Panc1 (cell line): ENCODE measurements at regions of chr17 and their contacts with region 1.

Region 1: DNA sequence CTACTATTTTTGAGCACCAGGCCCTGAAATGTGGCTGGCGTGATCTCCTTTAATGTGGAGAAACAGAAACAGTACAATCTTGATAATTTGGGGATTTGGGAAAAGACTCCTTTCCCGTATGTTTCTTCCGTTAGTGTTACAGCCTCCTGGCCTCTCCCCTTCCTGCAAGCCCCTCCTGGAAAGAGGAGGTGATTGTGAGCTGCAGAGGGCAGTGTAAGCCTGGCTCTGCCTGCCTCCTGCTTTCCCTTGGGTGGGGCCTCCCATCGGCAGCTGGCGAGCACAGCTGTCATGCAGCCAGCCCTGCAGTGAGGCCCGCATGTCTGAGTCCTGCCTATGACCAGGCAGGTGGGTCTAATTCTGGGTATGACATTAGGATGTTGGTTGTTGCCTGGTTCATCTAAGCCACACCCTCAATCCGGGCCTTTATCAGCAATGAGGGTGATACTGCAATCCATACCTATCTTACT is 48.7 kb upstream of the WSB1 start:
- DNase-seq: no peak
- ATAC-seq: peak; percentile 98
- H3K4me3 ChIP-seq: peak overlapping the region in 1 of 2 experiments; percentile 25; a peak in 2 of 4 replicates
- H3K27ac ChIP-seq: peak overlapping the region; percentile 46
- H3K4me1 ChIP-seq: peaks cover 18% of the 10 kb centered on the region
- H3K27me3 ChIP-seq: no peaks in the 10 kb centered on the region
- CTCF ChIP-seq: peak; percentile 82

Region 2: DNA sequence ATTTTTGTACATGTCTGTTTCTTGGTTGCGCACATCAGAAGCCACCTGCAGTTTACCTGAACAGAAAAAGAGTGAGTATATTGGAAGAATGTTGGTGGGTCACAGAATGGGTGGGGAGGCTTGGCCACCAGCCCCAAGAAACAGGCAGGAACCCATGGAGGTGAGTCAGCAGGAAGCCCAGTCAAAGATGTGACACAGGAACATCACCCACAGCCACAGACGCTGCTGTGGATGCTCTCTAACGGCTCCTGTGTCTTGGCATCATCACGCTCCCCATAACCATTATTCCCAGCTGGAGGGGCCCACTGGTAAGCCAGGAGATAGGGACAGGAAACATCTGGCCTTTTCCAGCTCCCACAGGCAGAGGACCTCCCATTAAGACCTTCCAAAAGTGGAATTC is 45.3 kb before region 1 on chr17:
- CTCF ChIA-PET with region 1: no interaction called
- POLR2A ChIA-PET with region 1: no interaction called
- in situ Hi-C with region 1: no loop called
- intact Hi-C with region 1: loop called (anchors 10 kb)
- DNase-seq: no peak
- ATAC-seq: no peak
- H3K4me3 ChIP-seq: no peak overlapping the region
- H3K27ac ChIP-seq: no peak overlapping the region
- H3K4me1 ChIP-seq: no peaks in the 10 kb centered on the region
- H3K27me3 ChIP-seq: no peaks in the 10 kb centered on the region
- CTCF ChIP-seq: no peak

Region 3: DNA sequence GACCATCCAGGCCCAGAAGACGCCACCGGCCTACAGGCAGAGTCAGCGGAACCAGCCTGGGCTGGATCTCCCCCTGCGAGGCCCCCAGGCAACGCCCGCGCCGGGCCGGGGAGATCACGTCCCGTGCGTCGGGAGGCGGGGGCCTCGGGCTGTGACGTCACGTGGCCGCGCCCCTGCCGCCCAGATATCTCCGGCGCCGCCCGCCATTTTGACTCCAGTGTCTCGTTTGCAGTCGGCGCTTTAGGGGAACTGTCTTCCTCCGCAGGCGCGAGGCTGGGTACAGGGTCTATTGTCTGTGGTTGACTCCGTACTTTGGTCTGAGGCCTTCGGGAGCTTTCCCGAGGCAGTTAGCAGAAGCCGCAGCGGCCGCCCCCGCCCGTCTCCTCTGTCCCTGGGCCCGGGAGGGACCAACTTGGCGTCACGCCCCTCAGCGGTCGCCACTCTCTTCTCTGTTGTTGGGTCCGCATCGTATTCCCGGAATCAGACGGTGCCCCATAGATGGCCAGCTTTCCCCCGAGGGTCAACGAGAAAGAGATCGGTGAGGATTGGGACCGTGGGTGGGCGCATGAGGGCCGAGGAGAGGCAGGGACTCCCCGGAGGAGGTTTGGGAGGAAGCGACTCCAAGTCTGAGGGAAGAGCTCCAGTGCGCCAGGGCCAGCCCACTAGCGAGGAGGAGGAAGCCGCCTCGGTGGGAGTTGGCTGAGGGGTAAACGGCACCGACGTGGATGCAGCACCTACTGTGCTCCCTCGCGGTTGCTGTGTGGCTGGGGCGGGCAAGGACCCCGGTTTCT is 48.8 kb after region 1 on chr17 and contains the start of gene WSB1:
- CTCF ChIA-PET with region 1: no interaction called
- POLR2A ChIA-PET with region 1: interaction called, 4 read pairs
- in situ Hi-C with region 1: no loop called
- intact Hi-C with region 1: loop called (anchors 5 kb)
- DNase-seq: peak; percentile 35
- ATAC-seq: peak; percentile 96
- H3K4me3 ChIP-seq: peak within 1 kb of the TSS; percentile 87 to 91
- H3K27ac ChIP-seq: peak within 1 kb of the TSS; percentile 95
- H3K4me1 ChIP-seq: peaks cover 19% of the 10 kb centered on the region
- H3K27me3 ChIP-seq: no peaks in the 10 kb centered on the region
- CTCF ChIP-seq: no peak
- total RNA-seq, gene WSB1: 114 TPM

Region 4: DNA sequence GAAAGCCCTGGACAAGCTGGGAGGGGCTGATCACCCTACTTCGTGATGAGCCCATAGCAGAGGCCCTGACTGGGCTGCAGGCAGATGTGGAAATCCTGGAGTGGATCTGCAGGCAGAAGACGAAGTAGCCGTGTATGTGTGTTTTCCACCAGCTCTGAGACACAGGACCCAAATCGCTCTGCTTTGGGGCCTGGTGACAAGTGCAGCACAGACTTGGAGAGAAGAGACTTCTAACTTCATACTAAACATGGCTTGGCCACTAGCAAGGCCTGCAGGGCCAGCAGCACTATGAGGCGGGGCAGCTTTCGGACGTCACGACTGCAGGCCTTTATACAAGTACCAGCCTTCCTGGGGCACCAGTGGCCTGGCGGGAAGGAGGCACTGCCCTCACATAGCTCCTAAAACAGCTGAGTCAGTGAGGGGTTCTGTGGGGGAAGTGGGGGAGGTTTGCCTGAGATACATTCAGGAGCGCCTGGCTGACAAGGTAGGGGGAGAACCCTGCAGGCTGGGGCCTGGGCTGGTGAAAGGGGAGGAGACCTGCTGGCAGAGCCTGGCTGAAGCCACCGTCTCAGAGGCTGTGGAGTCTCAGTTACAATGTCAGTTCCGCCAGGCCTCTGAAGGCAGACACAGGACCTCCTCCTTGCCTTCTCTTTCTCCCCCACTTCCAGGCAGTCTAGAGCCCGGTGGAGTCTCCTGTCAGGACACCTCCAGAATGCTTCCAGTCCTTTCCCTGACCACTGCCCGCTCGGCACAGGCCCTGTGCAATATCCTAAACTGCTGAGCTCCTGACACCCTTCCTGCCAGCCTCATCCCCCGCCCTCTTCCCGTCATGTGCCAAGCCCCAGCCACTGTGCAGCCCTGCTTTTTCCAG is 122.1 kb after region 1 on chr17:
- CTCF ChIA-PET with region 1: no interaction called
- POLR2A ChIA-PET with region 1: no interaction called
- in situ Hi-C with region 1: no loop called
- intact Hi-C with region 1: no loop called
- DNase-seq: no peak
- ATAC-seq: no peak
- H3K4me3 ChIP-seq: no peak overlapping the region
- H3K27ac ChIP-seq: no peak overlapping the region
- H3K4me1 ChIP-seq: no peaks in the 10 kb centered on the region; the same call in 1 of the 2 replicates
- H3K27me3 ChIP-seq: no peaks in the 10 kb centered on the region
- CTCF ChIP-seq: no peak